ENCODE measurements at regions of chr19 and their contacts with region 1.

Region 1: DNA sequence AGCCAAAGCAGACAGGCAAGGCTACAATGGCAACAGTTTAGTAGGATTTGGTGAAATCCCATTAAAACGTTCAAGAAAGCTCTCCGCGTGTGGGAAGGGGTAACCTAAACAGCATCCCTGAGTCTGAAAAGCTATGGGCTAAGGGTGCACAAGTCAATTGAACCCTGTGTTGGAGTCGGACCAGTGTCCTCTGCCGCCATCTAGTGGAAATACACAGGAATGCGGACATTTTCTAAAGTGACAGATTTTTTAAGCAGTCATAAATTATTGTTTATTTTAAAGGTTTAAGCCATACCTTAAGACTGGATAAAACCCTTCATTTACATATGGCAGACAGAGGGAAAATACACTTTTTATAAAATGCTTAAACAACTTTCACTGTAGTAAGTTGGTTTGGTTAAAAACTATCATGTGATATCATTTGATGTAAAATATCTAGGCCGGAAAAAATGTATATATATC is 26.5 kb upstream of the LSM14A start:
- DNase-seq: peak; percentile 54 to 60 (median 59)
- H3K4me3 ChIP-seq: no peak overlapping the region
- H3K4me3 Mint-ChIP-seq: no peak overlapping the region
- H3K27ac ChIP-seq: no peak overlapping the region
- H3K27ac Mint-ChIP-seq: no peak overlapping the region
- H3K4me1 ChIP-seq: no peaks in the 10 kb centered on the region
- H3K4me1 Mint-ChIP-seq: peaks cover 0 to 2% (median under 1%) of the 10 kb centered on the region in 4 donors
- H3K27me3 ChIP-seq: no peaks in the 10 kb centered on the region
- H3K27me3 Mint-ChIP-seq: peaks cover 0 to 1% of the 10 kb centered on the region in 2 donors

Region 2: DNA sequence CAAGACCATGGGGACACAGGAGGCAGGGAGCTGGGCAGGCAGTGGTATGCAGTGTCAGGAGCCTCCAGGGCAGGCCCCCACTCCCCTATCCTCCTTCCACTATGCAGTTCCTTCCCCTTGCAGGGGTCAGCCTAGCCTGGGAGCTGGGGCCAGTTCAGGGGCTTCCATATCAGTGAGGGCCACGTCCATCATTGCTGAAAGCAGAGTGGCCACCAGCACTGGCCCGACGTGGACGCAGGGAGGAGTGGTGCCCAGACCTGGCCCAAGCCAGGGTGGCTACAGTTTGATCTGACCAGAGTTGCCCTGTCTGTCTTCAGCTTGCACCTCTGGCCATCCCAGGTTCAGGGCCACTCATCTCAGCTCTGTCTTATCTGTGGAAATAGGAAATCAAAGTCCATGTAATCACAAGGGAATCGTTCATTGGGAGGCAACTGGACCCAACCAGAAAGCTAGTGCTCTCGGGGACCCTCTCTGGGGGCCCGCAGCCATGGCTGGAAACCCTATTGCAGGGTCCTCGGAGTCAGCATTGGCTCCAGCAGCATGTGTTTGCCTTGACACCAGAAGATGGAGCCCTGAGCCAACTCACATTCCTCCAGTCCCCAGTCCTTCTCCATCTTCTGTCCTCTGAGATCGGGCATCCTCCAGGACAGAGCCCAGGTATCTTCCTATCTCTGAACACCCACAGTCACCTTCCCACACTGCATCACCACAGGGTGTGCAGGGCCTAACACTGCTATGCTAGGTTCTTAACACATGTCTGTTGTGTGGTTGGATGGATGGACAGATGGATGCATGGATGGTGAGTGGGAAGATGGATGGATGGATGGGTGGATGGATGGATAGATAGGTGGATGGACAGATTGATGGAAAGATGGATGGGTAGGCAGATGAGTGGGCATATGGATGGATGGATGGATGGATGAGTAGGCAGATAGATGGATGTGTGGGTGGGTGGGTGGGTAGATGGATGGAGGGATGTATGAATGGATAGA is 424.8 kb before region 1 on chr19:
- CTCF ChIA-PET with region 1: no interaction called
- POLR2A ChIA-PET with region 1: no interaction called
- intact Hi-C with region 1: no loop called
- DNase-seq: no peak
- H3K4me3 ChIP-seq: no peak overlapping the region
- H3K4me3 Mint-ChIP-seq: no peak overlapping the region
- H3K27ac ChIP-seq: no peak overlapping the region
- H3K27ac Mint-ChIP-seq: no peak overlapping the region
- H3K4me1 ChIP-seq: no peaks in the 10 kb centered on the region
- H3K4me1 Mint-ChIP-seq: no peaks in the 10 kb centered on the region
- H3K27me3 ChIP-seq: no peaks in the 10 kb centered on the region
- H3K27me3 Mint-ChIP-seq: peaks cover 14 to 26% of the 10 kb centered on the region in 2 donors

Region 3: DNA sequence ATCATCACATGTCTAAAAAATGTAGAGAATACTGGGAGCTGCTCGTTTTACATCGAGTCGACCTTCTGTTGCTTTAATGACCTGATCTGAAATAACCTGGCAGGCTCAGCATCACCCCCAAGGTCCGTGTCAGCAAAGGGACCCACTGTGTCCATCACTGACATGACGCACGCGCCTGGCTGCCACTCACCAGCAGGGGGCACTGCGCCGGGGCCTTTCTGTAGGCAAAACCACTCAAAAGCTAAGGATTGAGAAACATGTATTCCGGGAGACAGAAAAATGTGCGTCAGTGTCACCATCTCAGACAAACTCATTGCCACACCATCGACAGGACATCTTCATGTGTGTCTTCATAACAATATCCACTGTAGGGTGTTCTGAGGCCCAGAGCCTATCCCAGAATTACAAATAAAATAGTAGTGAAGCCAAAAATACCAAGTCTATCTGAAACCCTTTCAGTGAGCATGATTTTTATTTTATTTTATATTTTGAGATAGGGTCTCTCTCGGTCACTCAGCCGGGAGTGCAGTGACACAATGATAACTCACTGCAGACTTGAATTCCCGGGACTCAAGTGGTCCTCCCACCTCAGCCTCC is 103.7 kb before region 1 on chr19:
- CTCF ChIA-PET with region 1: interaction called, 11 read pairs
- POLR2A ChIA-PET with region 1: no interaction called
- intact Hi-C with region 1: no loop called
- DNase-seq: peak; percentile 41 to 61 (median 45)
- H3K4me3 ChIP-seq: no peak overlapping the region
- H3K4me3 Mint-ChIP-seq: no peak overlapping the region
- H3K27ac ChIP-seq: no peak overlapping the region
- H3K27ac Mint-ChIP-seq: no peak overlapping the region
- H3K4me1 ChIP-seq: no peaks in the 10 kb centered on the region
- H3K4me1 Mint-ChIP-seq: peaks cover 0 to 2% (median 0%) of the 10 kb centered on the region in 4 donors
- H3K27me3 ChIP-seq: no peaks in the 10 kb centered on the region
- H3K27me3 Mint-ChIP-seq: peaks cover 7 to 23% of the 10 kb centered on the region in 2 donors

Region 4: DNA sequence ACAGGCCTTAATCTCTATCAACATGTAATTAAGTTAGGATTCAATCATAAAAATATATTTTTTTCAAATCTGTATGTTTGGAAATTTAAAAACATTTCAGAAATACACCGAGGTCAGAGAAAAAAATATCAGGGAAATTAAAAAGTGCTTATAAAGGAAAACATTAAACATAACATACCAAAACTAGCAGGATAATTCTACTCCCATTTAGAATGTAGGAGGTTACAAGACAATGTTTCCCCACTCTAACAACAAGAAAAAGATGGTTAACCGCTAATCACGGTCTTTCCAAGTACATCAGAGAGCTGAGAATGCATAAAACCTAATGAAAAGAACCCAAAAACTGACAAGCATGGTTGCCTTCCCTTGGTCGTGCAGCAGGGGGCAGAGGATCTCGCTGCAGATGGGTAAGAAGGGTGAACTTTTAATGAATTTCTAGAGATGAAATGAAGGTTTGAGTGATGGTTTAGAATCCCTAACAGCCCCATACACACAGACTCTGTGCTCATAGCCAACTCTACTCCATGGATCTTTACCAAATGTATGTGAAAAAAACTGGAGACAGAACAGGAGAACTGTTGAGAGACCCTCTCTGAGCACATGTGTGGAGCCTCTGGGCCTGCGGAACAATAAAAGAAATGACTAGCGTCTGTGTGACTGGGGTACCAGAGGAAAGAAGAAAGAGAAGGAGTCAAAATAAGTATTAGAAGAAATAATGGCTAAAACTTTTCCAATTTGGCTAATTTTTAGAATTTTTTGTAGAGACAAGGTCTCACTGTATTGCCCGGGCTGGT is 24.7 kb before region 1 on chr19:
- CTCF ChIA-PET with region 1: interaction called, 37 read pairs
- POLR2A ChIA-PET with region 1: no interaction called
- intact Hi-C with region 1: loop called (anchors 1 kb)
- DNase-seq: peak in 4 of 5 donors; percentile 36 to 48 (median 45)
- H3K4me3 ChIP-seq: no peak overlapping the region
- H3K4me3 Mint-ChIP-seq: no peak overlapping the region
- H3K27ac ChIP-seq: no peak overlapping the region
- H3K27ac Mint-ChIP-seq: no peak overlapping the region
- H3K4me1 ChIP-seq: peaks cover 5% of the 10 kb centered on the region
- H3K4me1 Mint-ChIP-seq: peaks cover 0 to 9% (median 4%) of the 10 kb centered on the region in 4 donors
- H3K27me3 ChIP-seq: no peaks in the 10 kb centered on the region
- H3K27me3 Mint-ChIP-seq: peaks cover 0 to 9% of the 10 kb centered on the region in 2 donors

Region 5: GRCh38 chr19:34134190-34135053 is 11.3 kb before region 1 on chr19:
- CTCF ChIA-PET with region 1: interaction called, 22 read pairs
- POLR2A ChIA-PET with region 1: interaction called, 5 read pairs
- intact Hi-C with region 1: no loop called
- DNase-seq: peak; percentile 76 to 87 (median 84)
- H3K4me3 ChIP-seq: peak overlapping the region; percentile 78 to 86
- H3K4me3 Mint-ChIP-seq: peak overlapping the region; percentile 92 to 99 (median 94)
- H3K27ac ChIP-seq: peak overlapping the region; percentile 79
- H3K27ac Mint-ChIP-seq: peak overlapping the region; percentile 77 to 93 (median 91)
- H3K4me1 ChIP-seq: peaks cover 5% of the 10 kb centered on the region
- H3K4me1 Mint-ChIP-seq: peaks cover 0 to 11% (median 5%) of the 10 kb centered on the region in 4 donors
- H3K27me3 ChIP-seq: no peaks in the 10 kb centered on the region
- H3K27me3 Mint-ChIP-seq: no peaks in the 10 kb centered on the region

Region 6: GRCh38 chr19:34232566-34233481 is 87.1 kb after region 1 on chr19:
- CTCF ChIA-PET with region 1: no interaction called
- POLR2A ChIA-PET with region 1: no interaction called
- intact Hi-C with region 1: no loop called
- DNase-seq: no peak
- H3K4me3 ChIP-seq: no peak overlapping the region
- H3K4me3 Mint-ChIP-seq: peak overlapping the region in 6 of 8 donors; percentile 5 to 67 (median 48)
- H3K27ac ChIP-seq: no peak overlapping the region
- H3K27ac Mint-ChIP-seq: peak overlapping the region; percentile 36 to 85 (median 73)
- H3K4me1 ChIP-seq: peaks cover 13% of the 10 kb centered on the region
- H3K4me1 Mint-ChIP-seq: peaks cover 13 to 27% (median 19%) of the 10 kb centered on the region in 4 donors
- H3K27me3 ChIP-seq: no peaks in the 10 kb centered on the region
- H3K27me3 Mint-ChIP-seq: no peaks in the 10 kb centered on the region